ENCODE measurements at regions of chr13 and their contacts with region 1.

Region 1: DNA sequence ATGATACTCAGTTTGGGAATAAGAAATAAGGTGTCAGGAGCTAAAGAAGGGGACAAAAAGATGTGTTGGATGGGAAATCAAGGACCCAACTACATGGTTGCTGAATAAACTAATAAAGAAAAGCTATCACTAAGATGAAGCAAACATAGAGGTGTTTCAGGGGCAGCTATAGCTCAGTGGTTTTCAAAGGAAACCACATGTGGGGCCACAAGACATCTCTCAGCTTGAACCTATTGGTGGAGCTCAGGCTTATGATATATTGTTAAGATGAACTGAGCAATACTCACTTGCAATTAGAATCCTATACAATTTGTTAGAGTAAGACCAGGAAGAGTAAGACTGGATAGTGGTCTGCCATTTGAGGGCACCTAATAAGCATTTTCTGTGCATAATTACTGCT is 45.1 kb upstream of the SPRY2 start:
- DNase-seq: no peak
- ATAC-seq: no peak
- H3K4me3 ChIP-seq: no peak overlapping the region
- H3K27ac ChIP-seq: no peak overlapping the region
- H3K4me1 ChIP-seq: peaks cover 0 to 7% (median 0%) of the 10 kb centered on the region in 9 donors
- H3K27me3 ChIP-seq: no peaks in the 10 kb centered on the region
- CTCF ChIP-seq: no peak

Region 2: DNA sequence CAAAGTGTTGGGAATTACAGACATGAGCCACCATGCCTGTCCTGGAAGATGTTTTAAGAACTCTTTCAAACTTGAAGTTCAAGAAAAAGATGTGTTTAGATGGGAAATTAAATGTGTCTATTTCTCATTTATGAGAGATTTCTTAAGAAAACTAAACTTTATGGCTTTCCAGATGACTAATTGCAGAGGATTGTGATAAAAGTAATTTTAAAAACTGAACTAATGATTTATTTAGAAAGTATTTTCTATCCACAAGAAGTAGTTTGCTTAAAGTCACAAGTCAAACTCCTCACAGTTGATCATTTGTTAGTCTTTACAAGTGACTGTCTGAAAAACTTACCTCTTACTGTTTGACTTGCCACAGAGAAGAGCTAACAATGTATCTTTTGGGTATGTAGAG is 44.6 kb after region 1 on chr13:
- intact Hi-C with region 1: loop called in 1 of 10 experiments (anchors 5 kb)
- DNase-seq: no peak
- ATAC-seq: no peak
- H3K4me3 ChIP-seq: no peak overlapping the region
- H3K27ac ChIP-seq: no peak overlapping the region
- H3K4me1 ChIP-seq: peaks cover 0 to 6% (median 0%) of the 10 kb centered on the region in 9 donors
- H3K27me3 ChIP-seq: no peaks in the 10 kb centered on the region
- CTCF ChIP-seq: no peak